PC-9 (cell line): ENCODE measurements at regions of chr17 and their contacts with region 1.

Region 1: DNA sequence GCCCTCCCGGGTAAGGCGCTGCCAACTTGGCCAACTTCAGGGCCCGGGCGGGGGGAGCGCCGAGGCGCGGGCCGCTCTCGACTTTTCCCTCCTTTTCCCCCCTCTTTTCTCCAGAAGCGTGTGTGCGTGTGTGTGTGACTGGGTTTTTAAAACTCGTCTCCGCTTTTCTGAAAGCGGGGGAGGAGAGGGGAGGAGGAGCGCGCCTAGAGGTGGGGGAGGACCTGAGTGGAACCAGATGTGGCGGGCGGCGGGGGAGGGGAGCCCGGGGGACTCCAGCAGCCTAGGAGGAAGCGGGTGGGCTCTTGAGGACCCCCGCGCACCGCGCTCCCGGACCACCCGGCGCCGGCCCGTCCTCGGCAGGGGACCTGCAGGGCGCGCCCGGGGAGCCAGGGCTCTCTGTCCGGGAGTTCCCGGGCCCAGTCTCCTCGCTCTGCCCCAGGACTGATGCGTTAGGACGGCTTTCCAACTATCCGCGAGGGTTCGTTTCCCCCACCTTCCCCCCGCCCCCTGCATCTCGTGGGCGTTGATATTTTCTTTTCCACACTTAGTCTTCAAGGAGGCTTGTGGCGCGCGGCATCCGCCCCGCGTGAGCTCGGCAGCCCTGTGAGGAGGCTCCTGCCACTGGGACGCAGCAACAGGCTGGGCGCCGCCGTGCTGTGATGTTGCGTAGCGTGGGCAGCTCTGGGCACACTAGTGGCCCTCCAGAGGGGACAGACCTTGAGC is 602 bp downstream of the MRC2 start:
- DNase-seq: no peak
- H3K4me3 ChIP-seq: peak overlapping the region; percentile 62
- H3K27ac ChIP-seq: no peak overlapping the region
- H3K4me1 ChIP-seq: 0 out of 2 replicates have a peak, but pooled peaks cover 4% of the 10 kb centered on the region
- H3K27me3 ChIP-seq: peaks cover 27% of the 10 kb centered on the region
- CTCF ChIP-seq: no peak

Region 2: GRCh38 chr17:62309396-62309795 is 318.7 kb before region 1 on chr17:
- CTCF ChIA-PET with region 1: no interaction called
- POLR2A ChIA-PET with region 1: interaction called, 14 read pairs
- intact Hi-C with region 1: no loop called
- DNase-seq: no peak
- H3K4me3 ChIP-seq: no peak overlapping the region
- H3K27ac ChIP-seq: no peak overlapping the region
- H3K4me1 ChIP-seq: no peaks in the 10 kb centered on the region
- H3K27me3 ChIP-seq: no peaks in the 10 kb centered on the region
- CTCF ChIP-seq: no peak